ENCODE measurements at regions of chr11 and their contacts with region 1.

Region 1: GRCh38 chr11:85590848-85591483 is 36.2 kb downstream of the DLG2 start:
- DNase-seq: peak; percentile 4
- H3K4me3 ChIP-seq: no peak overlapping the region
- H3K27ac ChIP-seq: no peak overlapping the region
- H3K27me3 ChIP-seq: peaks cover under 1% of the 10 kb centered on the region
- CTCF ChIP-seq: peak; percentile 32

Region 2: GRCh38 chr11:84558085-84558905 is 1032.7 kb before region 1 on chr11:
- CTCF ChIA-PET with region 1: interaction called, 22 read pairs
- POLR2A ChIA-PET with region 1: no interaction called
- DNase-seq: peak; percentile 4
- H3K4me3 ChIP-seq: no peak overlapping the region
- H3K27ac ChIP-seq: no peak overlapping the region
- H3K27me3 ChIP-seq: no peaks in the 10 kb centered on the region
- CTCF ChIP-seq: peak; percentile 89

Region 3: DNA sequence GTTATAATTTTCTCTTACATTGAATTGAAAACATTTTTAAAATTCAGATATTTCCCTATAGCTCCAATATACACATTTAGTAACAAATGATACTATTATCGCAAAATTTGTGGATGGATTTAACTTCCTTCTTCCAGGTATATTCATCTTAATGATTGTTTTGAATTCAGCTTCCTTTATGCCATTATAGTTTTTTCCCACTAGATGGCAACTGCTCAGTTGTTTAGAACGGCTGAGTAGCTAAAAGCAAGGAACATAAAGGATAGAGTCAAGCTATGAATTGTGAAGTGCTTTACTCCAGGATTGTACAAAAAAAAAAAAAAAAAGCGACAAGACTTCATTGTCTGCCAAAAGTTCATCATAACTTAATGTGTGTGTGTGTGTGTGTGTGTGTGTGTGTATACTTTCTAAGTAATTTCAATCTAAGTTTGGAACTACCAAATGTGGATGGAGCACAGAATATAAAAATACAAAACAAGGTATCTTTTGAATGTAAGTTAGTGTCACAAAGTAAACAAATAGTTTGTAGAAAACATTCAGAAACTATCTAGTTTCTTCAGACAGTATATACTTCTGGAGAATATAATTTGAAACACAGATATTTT is 810.2 kb before region 1 on chr11:
- CTCF ChIA-PET with region 1: interaction called, 41 read pairs
- POLR2A ChIA-PET with region 1: no interaction called
- DNase-seq: no peak
- H3K4me3 ChIP-seq: no peak overlapping the region
- H3K27ac ChIP-seq: no peak overlapping the region
- H3K27me3 ChIP-seq: no peaks in the 10 kb centered on the region
- CTCF ChIP-seq: peak; percentile 69

Region 4: GRCh38 chr11:84800755-84801346 is 790.1 kb before region 1 on chr11:
- CTCF ChIA-PET with region 1: interaction called, 14 read pairs
- POLR2A ChIA-PET with region 1: no interaction called
- DNase-seq: peak; percentile 15
- H3K4me3 ChIP-seq: no peak overlapping the region
- H3K27ac ChIP-seq: no peak overlapping the region
- H3K27me3 ChIP-seq: peaks cover 2% of the 10 kb centered on the region
- CTCF ChIP-seq: peak; percentile 56

Region 5: GRCh38 chr11:85525686-85526085 is 65.3 kb before region 1 on chr11:
- CTCF ChIA-PET with region 1: no interaction called
- POLR2A ChIA-PET with region 1: no interaction called
- DNase-seq: no peak
- H3K4me3 ChIP-seq: no peak overlapping the region
- H3K27ac ChIP-seq: no peak overlapping the region
- H3K27me3 ChIP-seq: no peaks in the 10 kb centered on the region
- CTCF ChIP-seq: no peak

Measured in AG04450 (cell line).